Psoas muscle (tissue), 8 donors: ENCODE measurements at regions of chr14 and their contacts with region 1.

Region 1: GRCh38 chr14:69441948-69442347 is 42.6 kb upstream of the PLEKHD1 start:
- DNase-seq: no peak
- ATAC-seq: no peak
- H3K4me3 ChIP-seq: no peak overlapping the region
- H3K27ac ChIP-seq: no peak overlapping the region
- H3K4me1 ChIP-seq: no peaks in the 10 kb centered on the region
- H3K27me3 ChIP-seq: no peaks in the 10 kb centered on the region
- CTCF ChIP-seq: no peak

Region 2: GRCh38 chr14:68232300-68233055 is 1209.5 kb before region 1 on chr14:
- intact Hi-C with region 1: no loop called
- DNase-seq: no peak
- ATAC-seq: peak; percentile 96 to 97 (median 97)
- H3K4me3 ChIP-seq: no peak overlapping the region
- H3K27ac ChIP-seq: peak overlapping the region; percentile 90
- H3K4me1 ChIP-seq: peaks cover 51% of the 10 kb centered on the region
- H3K27me3 ChIP-seq: no peaks in the 10 kb centered on the region
- CTCF ChIP-seq: no peak

Region 3: DNA sequence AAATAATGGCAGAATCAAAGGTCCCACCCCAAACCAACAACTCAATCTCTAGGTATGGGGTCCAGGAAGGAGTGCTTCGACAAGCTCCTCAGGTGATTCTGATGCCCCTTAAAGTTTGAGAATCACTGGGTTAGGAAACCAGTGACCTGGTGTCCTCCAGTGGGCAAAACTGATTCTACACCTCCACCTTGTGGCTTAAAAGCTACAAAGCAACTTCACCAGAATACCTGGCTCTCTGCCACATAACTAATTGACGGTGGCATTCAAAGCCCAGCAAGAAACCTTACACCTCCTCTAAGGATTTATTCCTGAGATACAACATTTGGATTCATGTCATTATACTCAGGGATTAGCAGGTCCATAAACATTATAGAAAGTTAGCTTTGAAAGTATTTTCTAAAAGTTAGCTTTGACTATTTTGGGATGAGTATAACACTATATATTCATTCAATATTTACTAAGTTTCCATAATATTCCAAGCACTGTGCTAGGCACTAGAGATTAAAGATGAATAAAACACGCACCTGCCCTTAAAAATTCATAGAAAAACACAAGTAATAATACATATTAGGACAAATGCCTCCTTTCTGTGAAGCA is 334.4 kb before region 1 on chr14:
- intact Hi-C with region 1: no loop called
- DNase-seq: no peak
- ATAC-seq: peak; percentile 62 to 86 (median 72)
- H3K4me3 ChIP-seq: no peak overlapping the region
- H3K27ac ChIP-seq: no peak overlapping the region
- H3K4me1 ChIP-seq: peaks cover 4% of the 10 kb centered on the region
- H3K27me3 ChIP-seq: no peaks in the 10 kb centered on the region
- CTCF ChIP-seq: peak; percentile 73

Region 4: GRCh38 chr14:69346710-69347109 is 95.2 kb before region 1 on chr14:
- intact Hi-C with region 1: no loop called
- DNase-seq: peak in 1 of 2 donors; percentile 34
- ATAC-seq: peak in 2 of 4 donors; percentile 47 to 57
- H3K4me3 ChIP-seq: no peak overlapping the region
- H3K27ac ChIP-seq: no peak overlapping the region
- H3K4me1 ChIP-seq: no peaks in the 10 kb centered on the region
- H3K27me3 ChIP-seq: peaks cover 0 to 1% (median 0%) of the 10 kb centered on the region in 3 donors
- CTCF ChIP-seq: peak; percentile 43

Region 5: GRCh38 chr14:69368381-69368780 is 73.6 kb before region 1 on chr14:
- intact Hi-C with region 1: loop called in 1 of 2 experiments (anchors 5 kb)
- DNase-seq: no peak
- ATAC-seq: peak; percentile 27 to 61 (median 58)
- H3K4me3 ChIP-seq: no peak overlapping the region
- H3K27ac ChIP-seq: no peak overlapping the region
- H3K4me1 ChIP-seq: no peaks in the 10 kb centered on the region
- H3K27me3 ChIP-seq: no peaks in the 10 kb centered on the region
- CTCF ChIP-seq: no peak

Region 6: DNA sequence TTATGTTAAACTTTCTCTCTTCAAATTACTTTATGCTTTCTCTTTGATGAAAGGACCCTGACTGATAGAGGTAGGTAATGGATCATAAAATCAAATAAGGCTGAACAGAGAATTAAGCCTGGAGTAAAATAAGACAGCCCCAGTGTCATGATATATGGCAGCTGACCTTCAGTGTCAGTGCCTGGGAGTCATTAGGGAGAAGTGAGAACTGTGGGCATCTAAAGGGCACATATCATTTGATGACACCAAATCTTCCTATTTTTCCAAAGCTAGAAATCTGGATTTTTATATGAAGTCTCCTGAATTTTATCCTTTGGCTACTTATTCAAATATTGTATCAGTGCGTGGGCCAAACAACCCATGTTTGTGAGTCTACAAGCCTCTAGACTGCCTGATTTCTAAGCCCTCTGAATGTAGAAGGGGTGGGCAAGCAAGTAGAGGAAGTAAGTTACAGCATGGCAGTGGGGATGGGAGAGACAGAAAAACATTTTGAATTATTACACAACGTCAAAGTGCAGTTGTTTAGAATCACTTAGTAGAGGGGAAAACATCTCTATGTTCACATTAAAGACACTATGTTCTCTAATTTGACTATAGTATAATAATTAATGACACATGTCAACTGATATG is 33.5 kb before region 1 on chr14:
- intact Hi-C with region 1: loop called in 1 of 2 experiments (anchors 2 kb)
- DNase-seq: no peak
- ATAC-seq: no peak
- H3K4me3 ChIP-seq: no peak overlapping the region
- H3K27ac ChIP-seq: no peak overlapping the region
- H3K4me1 ChIP-seq: peaks cover 13% of the 10 kb centered on the region
- H3K27me3 ChIP-seq: no peaks in the 10 kb centered on the region
- CTCF ChIP-seq: no peak

Region 7: GRCh38 chr14:69615496-69616407 is 173.8 kb after region 1 on chr14:
- intact Hi-C with region 1: no loop called
- DNase-seq: peak in 1 of 2 donors; percentile 35
- ATAC-seq: peak; percentile 7 to 40 (median 22)
- H3K4me3 ChIP-seq: peak overlapping the region; percentile 41
- H3K27ac ChIP-seq: peak overlapping the region; percentile 97
- H3K4me1 ChIP-seq: peaks cover 72% of the 10 kb centered on the region
- H3K27me3 ChIP-seq: no peaks in the 10 kb centered on the region
- CTCF ChIP-seq: no peak